Activated naive CD4-positive, alpha-beta T cell treated with anti-CD3 and anti-CD28 coated beads for 36 hours (primary cell): ENCODE measurements at regions of chrX and their contacts with region 1.

Region 1: GRCh38 chrX:129726307-129727111 is 12.3 kb upstream of the XPNPEP2 start:
- DNase-seq: peak; percentile 52
- H3K4me3 Mint-ChIP-seq: no peak overlapping the region
- H3K27ac Mint-ChIP-seq: no peak overlapping the region
- H3K4me1 Mint-ChIP-seq: peaks cover 36% of the 10 kb centered on the region
- H3K27me3 Mint-ChIP-seq: no peaks in the 10 kb centered on the region

Region 2: DNA sequence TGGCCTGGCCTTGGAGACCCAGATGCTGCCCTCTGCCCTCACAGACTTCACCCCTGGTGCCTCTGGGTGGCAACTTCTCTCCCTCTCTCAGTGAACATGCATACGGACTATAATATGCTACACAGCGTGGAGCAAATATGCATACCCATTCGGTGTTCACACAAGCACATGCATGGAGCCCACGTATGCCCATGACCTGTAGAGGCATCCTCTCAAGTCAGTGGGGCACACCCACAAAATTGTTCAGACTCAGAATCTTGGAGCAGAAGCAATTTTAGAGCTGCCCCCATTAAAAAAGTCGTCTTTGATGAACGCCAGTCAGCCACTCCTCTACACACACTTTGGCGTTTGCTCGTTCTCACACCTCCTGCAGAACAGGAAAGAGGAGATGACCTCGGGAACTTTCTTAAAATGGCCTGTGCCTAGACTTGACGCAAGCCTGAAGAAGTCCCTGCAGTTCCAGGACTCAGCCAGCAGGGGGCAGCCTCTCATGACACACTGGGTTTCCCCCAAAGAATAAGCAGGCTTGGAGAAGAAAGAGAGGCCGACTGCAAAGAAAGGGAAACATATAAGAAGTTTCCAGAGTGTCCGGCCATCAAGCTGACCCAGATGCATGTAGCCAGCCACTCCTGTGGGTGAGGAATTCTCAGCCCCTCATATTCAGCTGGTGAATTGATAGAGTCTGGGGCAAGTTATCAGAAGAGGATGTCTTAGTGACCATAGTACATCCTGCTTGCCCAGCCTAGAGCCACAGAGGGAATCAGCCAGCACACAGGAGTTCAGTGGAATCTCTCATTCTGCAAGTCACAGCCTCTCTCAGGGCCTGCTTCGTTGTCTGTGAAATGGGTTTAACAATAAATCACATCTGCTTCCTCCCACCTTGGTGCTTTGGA is 89.0 kb before region 1 on chrX:
- CTCF ChIA-PET with region 1: interaction called, 13 read pairs
- intact Hi-C with region 1: loop called (anchors 1 kb)
- DNase-seq: peak; percentile 86
- H3K4me3 Mint-ChIP-seq: no peak overlapping the region
- H3K27ac Mint-ChIP-seq: no peak overlapping the region
- H3K4me1 Mint-ChIP-seq: peaks cover 1% of the 10 kb centered on the region
- H3K27me3 Mint-ChIP-seq: no peaks in the 10 kb centered on the region

Region 3: DNA sequence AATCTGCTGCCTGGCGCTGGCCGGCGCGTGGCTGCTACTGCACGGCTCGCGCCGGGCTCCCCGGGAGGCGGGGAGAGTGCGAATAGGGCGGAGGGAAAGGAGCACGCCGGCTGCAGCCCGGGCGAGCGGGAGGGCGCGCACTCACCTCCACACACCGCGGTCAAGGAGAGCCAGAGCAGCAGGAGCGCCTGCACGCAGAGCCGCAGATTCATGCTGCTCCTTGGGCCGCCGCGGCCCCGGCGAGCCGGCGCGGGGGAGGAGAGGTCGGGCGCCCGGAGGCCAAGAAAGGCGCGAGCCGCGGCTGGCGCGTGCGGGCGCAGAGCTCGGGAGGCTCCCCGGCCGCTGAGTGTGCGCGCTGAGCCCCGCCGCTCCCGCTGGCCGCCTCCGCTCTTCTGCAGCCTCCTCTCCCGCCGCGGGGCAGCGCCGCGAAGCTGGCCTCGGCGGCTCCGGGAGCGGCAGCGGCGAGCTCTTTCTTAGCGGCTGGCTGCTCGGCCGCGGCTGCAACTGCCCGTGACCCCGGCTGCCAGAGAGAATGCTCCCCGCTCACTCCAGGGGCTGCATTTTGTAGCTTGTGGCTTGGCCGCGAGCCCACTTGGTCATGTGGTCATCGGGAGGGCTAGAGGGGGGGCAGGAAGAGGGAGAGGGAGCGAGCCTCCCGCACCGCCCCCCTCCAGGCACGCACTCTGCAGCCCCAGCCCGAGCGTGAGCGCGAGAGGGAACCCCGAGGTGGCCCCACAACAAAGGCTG is 71.9 kb before region 1 on chrX and contains the start of gene APLN:
- CTCF ChIA-PET with region 1: interaction called, 4 read pairs
- intact Hi-C with region 1: loop called (anchors 1 kb)
- DNase-seq: no peak
- H3K4me3 Mint-ChIP-seq: peak within 1 kb of the TSS; percentile 61
- H3K27ac Mint-ChIP-seq: no peak within 1 kb of the TSS
- H3K4me1 Mint-ChIP-seq: peaks cover 6% of the 10 kb centered on the region
- H3K27me3 Mint-ChIP-seq: peaks cover 11% of the 10 kb centered on the region
- total RNA-seq, gene APLN: 0.15 to 0.36 TPM

Region 4: GRCh38 chrX:129678614-129679195 is 47.8 kb before region 1 on chrX:
- CTCF ChIA-PET with region 1: no interaction called
- intact Hi-C with region 1: loop called (anchors 2 kb)
- DNase-seq: peak; percentile 50
- H3K4me3 Mint-ChIP-seq: peak overlapping the region; percentile 57
- H3K27ac Mint-ChIP-seq: peak overlapping the region; percentile 24
- H3K4me1 Mint-ChIP-seq: peaks cover 12% of the 10 kb centered on the region
- H3K27me3 Mint-ChIP-seq: no peaks in the 10 kb centered on the region

Region 5: GRCh38 chrX:129737916-129738315 is 11.4 kb after region 1 on chrX:
- CTCF ChIA-PET with region 1: interaction called, 12 read pairs
- intact Hi-C with region 1: no loop called
- DNase-seq: no peak
- H3K4me3 Mint-ChIP-seq: no peak overlapping the region
- H3K27ac Mint-ChIP-seq: no peak overlapping the region
- H3K4me1 Mint-ChIP-seq: peaks cover 26% of the 10 kb centered on the region
- H3K27me3 Mint-ChIP-seq: no peaks in the 10 kb centered on the region

Region 6: GRCh38 chrX:129772796-129773431 is 46.4 kb after region 1 on chrX:
- CTCF ChIA-PET with region 1: no interaction called
- intact Hi-C with region 1: no loop called
- DNase-seq: peak; percentile 68
- H3K4me3 Mint-ChIP-seq: peak overlapping the region; percentile 32
- H3K27ac Mint-ChIP-seq: peak overlapping the region; percentile 91
- H3K4me1 Mint-ChIP-seq: peaks cover 67% of the 10 kb centered on the region
- H3K27me3 Mint-ChIP-seq: no peaks in the 10 kb centered on the region

Region 7: DNA sequence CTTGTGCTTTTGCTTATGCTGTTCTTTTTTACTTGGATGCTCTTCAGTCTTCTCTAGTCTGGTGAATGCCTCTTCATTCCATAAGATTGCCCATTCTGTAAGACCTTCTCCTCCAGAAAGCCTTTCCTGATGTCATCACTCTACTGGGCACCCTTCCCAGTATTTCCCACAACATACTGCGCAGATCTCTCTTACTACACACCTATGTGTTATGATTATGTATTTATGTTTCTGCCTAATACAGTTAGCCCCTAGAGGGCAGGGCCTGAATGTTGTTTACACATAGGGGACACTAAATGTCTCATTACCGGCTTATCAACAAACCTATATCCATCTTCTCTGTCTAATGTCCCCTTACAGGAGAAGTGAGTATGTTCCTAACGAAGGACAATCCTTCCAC is 418.0 kb after region 1 on chrX:
- CTCF ChIA-PET with region 1: no interaction called
- intact Hi-C with region 1: no loop called
- DNase-seq: no peak
- H3K4me3 Mint-ChIP-seq: no peak overlapping the region
- H3K27ac Mint-ChIP-seq: no peak overlapping the region
- H3K4me1 Mint-ChIP-seq: no peaks in the 10 kb centered on the region
- H3K27me3 Mint-ChIP-seq: no peaks in the 10 kb centered on the region

Region 8: GRCh38 chrX:130155564-130155963 is 429.1 kb after region 1 on chrX:
- CTCF ChIA-PET with region 1: no interaction called
- intact Hi-C with region 1: no loop called
- DNase-seq: no peak
- H3K4me3 Mint-ChIP-seq: no peak overlapping the region
- H3K27ac Mint-ChIP-seq: no peak overlapping the region
- H3K4me1 Mint-ChIP-seq: peaks cover 17% of the 10 kb centered on the region
- H3K27me3 Mint-ChIP-seq: no peaks in the 10 kb centered on the region